ENCODE measurements at regions of chr20 and their contacts with region 1.

Region 1: DNA sequence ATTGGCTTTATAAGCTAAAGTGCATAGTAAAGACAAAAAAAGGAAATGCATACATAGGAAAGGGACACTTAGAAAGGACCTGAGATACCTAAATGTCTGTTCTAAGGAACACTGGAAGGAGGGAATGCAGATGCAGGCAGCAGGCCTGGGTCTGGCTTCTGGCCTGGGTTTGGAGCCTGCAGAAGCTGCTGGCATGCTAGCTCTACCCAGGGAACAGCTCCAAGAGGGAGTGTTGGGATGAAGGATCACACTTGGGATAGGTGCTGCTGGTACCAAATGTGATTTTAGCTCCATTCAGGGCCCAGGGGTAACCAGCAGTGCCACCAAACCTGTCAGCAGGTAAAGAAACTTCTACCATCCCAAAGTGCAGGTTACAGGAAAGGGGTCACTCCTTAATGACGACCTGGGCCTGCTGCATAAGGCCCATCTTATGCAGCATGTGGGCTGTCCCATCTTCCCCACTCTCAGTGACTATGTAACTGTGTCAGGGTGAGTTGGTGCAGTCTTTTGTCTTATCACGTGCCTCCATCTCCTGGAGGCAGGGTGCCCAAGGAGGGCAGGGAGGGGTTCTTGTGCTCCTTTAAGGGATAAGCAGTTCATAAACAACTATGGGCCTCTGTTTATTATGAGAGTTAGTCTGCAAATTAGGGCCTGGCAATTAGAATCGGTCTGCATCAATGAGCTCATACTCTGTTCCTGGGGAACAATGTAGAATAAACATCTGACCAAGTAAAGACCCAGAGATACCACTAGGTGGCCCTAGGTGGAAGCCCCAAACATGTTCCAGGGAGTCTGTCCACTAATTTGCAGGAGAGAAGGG is 26.9 kb downstream of the DDX27 start:
- H3K4me3 ChIP-seq: no peak overlapping the region
- H3K27ac ChIP-seq: no peak overlapping the region
- H3K4me1 ChIP-seq: no peaks in the 10 kb centered on the region; the same call in 1 of the 2 replicates
- CTCF ChIP-seq: peak; percentile 44; the same call in 1 of the 2 replicates

Region 2: GRCh38 chr20:49256261-49256660 is 10.1 kb after region 1 on chr20:
- CTCF ChIA-PET with region 1: interaction called, 12 read pairs
- POLR2A ChIA-PET with region 1: interaction called, 5 read pairs
- H3K4me3 ChIP-seq: no peak overlapping the region
- H3K27ac ChIP-seq: no peak overlapping the region
- H3K4me1 ChIP-seq: no peaks in the 10 kb centered on the region
- CTCF ChIP-seq: no peak

Region 3: DNA sequence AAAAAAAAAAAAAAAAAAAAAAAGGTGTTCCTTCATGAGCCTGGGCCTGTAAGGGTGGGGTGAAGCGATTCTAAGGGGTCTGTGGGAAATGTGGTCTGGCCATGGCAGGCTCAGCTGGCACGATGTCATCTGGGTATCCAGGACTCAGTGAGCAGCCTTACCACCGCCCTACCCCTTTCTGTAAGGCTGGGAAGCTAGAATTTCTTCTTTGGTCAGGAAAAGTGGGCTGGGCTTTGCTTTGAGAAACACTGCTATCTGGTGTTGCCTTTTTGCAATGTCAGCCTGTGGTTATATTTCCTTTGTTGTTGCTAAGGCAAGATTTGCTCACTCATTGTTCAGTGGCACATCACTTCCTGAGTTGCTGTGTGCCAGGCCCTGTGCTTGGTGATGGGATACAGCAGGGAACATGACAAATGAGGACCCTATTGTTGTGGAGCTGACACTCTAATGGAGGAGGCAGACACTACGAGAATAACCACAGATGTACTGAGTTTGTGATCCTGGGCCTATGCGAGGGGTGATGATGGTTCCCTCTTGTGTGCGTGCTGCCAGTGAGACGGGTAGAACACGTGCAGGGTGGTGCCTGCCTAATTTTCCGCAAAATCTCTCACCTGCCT is 77.6 kb after region 1 on chr20:
- CTCF ChIA-PET with region 1: interaction called, 63 read pairs
- POLR2A ChIA-PET with region 1: no interaction called
- H3K4me3 ChIP-seq: no peak overlapping the region
- H3K27ac ChIP-seq: no peak overlapping the region
- H3K4me1 ChIP-seq: no peaks in the 10 kb centered on the region
- CTCF ChIP-seq: peak; percentile 30; the same call in 1 of the 2 replicates

Region 4: GRCh38 chr20:49739042-49739441 is 492.9 kb after region 1 on chr20:
- CTCF ChIA-PET with region 1: no interaction called
- POLR2A ChIA-PET with region 1: no interaction called
- H3K4me3 ChIP-seq: no peak overlapping the region
- H3K27ac ChIP-seq: no peak overlapping the region
- H3K4me1 ChIP-seq: no peaks in the 10 kb centered on the region
- CTCF ChIP-seq: no peak

Measured in HEK293 (cell line).